Activated CD8-positive, alpha-beta T cell treated with anti-CD3 and anti-CD28 coated beads, Interleukin-2, amount 10 ng/mL, durations not matched to agents 7 days and 5 days (primary cell): ENCODE measurements at regions of chr2 and their contacts with region 1.

Region 1: GRCh38 chr2:197279997-197280746 is 30.4 kb downstream of the ANKRD44 start:
- DNase-seq: no peak
- ATAC-seq: peak; percentile 52
- H3K4me3 Mint-ChIP-seq: peak overlapping the region; percentile 36
- H3K27ac Mint-ChIP-seq: peak overlapping the region; percentile 67
- H3K4me1 Mint-ChIP-seq: peaks cover 79% of the 10 kb centered on the region
- H3K27me3 Mint-ChIP-seq: no peaks in the 10 kb centered on the region

Region 2: GRCh38 chr2:197269811-197270210 is 10.4 kb before region 1 on chr2:
- CTCF ChIA-PET with region 1: interaction called, 10 read pairs
- POLR2A ChIA-PET with region 1: interaction called, 6 read pairs
- DNase-seq: no peak
- ATAC-seq: no peak
- H3K4me3 Mint-ChIP-seq: no peak overlapping the region
- H3K27ac Mint-ChIP-seq: peak overlapping the region; percentile 49
- H3K4me1 Mint-ChIP-seq: peaks cover 92% of the 10 kb centered on the region
- H3K27me3 Mint-ChIP-seq: no peaks in the 10 kb centered on the region